ENCODE measurements at regions of chr12 and their contacts with region 1.

Region 1: GRCh38 chr12:94649349-94650142 is 811 bp downstream of the TMCC3 start:
- DNase-seq: peak; percentile 64
- H3K4me3 ChIP-seq: peak overlapping the region; percentile 52 to 96 (median 87)
- H3K27ac ChIP-seq: peak overlapping the region; percentile 85
- H3K4me1 ChIP-seq: peaks cover 28% of the 10 kb centered on the region
- H3K27me3 ChIP-seq: no peaks in the 10 kb centered on the region
- CTCF ChIP-seq: peak; percentile 29 to 43
- POLR2A ChIP-seq: no peak

Region 2: GRCh38 chr12:94676031-94676641 is 26.6 kb after region 1 on chr12:
- CTCF ChIA-PET with region 1: interaction called, 4 read pairs
- POLR2A ChIA-PET with region 1: no interaction called
- dilution Hi-C with region 1: no loop called
- intact Hi-C with region 1: loop called (anchors 1 kb)
- DNase-seq: peak; percentile 84
- H3K4me3 ChIP-seq: no peak overlapping the region
- H3K27ac ChIP-seq: peak overlapping the region; percentile 66
- H3K4me1 ChIP-seq: peaks cover 40% of the 10 kb centered on the region
- H3K27me3 ChIP-seq: no peaks in the 10 kb centered on the region
- CTCF ChIP-seq: no peak
- POLR2A ChIP-seq: no peak

Region 3: GRCh38 chr12:94689002-94689645 is 39.6 kb after region 1 on chr12:
- CTCF ChIA-PET with region 1: interaction called, 3 read pairs
- POLR2A ChIA-PET with region 1: no interaction called
- dilution Hi-C with region 1: no loop called
- intact Hi-C with region 1: loop called (anchors 1 kb)
- DNase-seq: peak; percentile 74
- H3K4me3 ChIP-seq: no peak overlapping the region
- H3K27ac ChIP-seq: peak overlapping the region; percentile 54
- H3K4me1 ChIP-seq: peaks cover 20% of the 10 kb centered on the region
- H3K27me3 ChIP-seq: no peaks in the 10 kb centered on the region
- CTCF ChIP-seq: no peak
- POLR2A ChIP-seq: no peak

Region 4: DNA sequence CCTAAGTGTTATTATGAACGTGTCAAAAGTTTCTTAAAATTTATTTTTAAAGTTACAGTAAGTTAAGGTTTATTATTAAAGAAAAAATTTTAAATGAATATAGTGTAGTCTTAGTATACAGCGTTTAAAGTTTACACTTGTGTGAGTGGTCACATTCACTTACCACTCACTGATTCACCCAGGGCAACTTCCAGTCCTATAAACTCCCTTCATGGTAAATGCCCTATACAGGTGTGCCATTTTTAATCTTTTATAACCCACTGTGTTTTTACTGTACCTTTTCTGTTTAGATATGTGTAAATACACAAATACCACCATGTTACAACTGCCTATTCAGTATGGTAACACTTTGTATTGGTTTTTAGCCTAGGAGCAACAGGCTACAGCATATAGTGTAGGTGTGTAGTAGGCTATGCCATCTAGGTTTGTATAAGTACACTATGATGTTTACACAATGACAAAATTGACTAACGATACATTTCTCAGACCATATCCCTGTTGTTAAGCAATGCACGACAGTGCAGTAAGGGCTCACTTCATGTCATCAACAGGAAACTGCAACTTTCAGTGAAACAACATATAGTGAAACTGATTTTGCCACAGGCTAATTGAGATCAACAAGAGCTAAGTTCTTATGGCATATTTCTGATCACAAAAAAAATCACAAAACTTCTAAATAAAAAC is 112.9 kb after region 1 on chr12:
- CTCF ChIA-PET with region 1: interaction called, 4 read pairs
- POLR2A ChIA-PET with region 1: no interaction called
- dilution Hi-C with region 1: no loop called
- intact Hi-C with region 1: loop called (anchors 2 kb)
- DNase-seq: no peak
- H3K4me3 ChIP-seq: no peak overlapping the region
- H3K27ac ChIP-seq: peak overlapping the region; percentile 89
- H3K4me1 ChIP-seq: peaks cover 9% of the 10 kb centered on the region
- H3K27me3 ChIP-seq: no peaks in the 10 kb centered on the region
- CTCF ChIP-seq: no peak
- POLR2A ChIP-seq: no peak

Region 5: GRCh38 chr12:94875525-94875924 is 226.0 kb after region 1 on chr12:
- CTCF ChIA-PET with region 1: no interaction called
- POLR2A ChIA-PET with region 1: no interaction called
- dilution Hi-C with region 1: no loop called
- intact Hi-C with region 1: loop called (anchors 5 kb)
- DNase-seq: peak; percentile 41
- H3K4me3 ChIP-seq: no peak overlapping the region
- H3K27ac ChIP-seq: no peak overlapping the region
- H3K4me1 ChIP-seq: no peaks in the 10 kb centered on the region
- H3K27me3 ChIP-seq: peaks cover 44 to 52% of the 10 kb centered on the region in 2 experiments
- CTCF ChIP-seq: peak in 1 of 2 donors; percentile 27
- POLR2A ChIP-seq: no peak

Measured in endothelial cell of umbilical vein (primary cell).